Testis (tissue), 5 donors: ENCODE measurements at regions of chr4 and their contacts with region 1.

Region 1: DNA sequence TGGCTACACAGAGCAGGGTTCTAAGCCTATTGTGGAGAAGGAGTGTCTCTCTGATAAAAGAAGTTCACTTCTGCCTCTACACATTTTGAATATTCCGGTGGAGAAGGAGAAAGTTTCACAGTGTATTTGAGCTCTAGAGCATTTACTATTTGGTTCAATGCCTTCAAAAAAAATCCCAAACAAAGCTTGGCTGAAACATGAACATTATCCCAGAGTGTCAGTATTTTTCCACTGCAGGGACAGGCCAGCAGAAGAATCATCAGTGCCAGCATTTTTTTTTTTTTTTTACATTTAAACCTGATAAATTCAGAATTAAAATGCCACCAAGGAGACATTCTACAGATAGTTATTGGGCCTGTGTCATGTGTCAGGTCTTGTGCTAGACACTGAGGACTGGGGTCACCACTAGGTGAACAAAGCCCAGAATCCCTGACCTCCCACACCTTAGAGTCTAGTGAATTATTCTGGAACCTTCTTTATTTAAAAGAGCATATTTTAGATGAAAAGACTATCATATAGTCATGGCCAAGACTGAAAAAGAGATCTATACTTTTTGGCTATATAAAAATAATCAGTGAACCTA is 48.0 kb upstream of the NAP1L5 start:
- DNase-seq: no peak
- H3K4me3 ChIP-seq: no peak overlapping the region
- H3K27ac ChIP-seq: peak overlapping the region; percentile 57 to 66
- H3K4me1 ChIP-seq: peaks cover 18% of the 10 kb centered on the region
- H3K27me3 ChIP-seq: no peaks in the 10 kb centered on the region
- CTCF ChIP-seq: no peak
- POLR2A ChIP-seq: no peak

Region 2: GRCh38 chr4:88893961-88894360 is 148.3 kb after region 1 on chr4:
- intact Hi-C with region 1: loop called (anchors 5 kb)
- DNase-seq: no peak
- H3K4me3 ChIP-seq: no peak overlapping the region
- H3K27ac ChIP-seq: no peak overlapping the region
- H3K4me1 ChIP-seq: no peaks in the 10 kb centered on the region
- H3K27me3 ChIP-seq: no peaks in the 10 kb centered on the region
- CTCF ChIP-seq: no peak
- POLR2A ChIP-seq: no peak

Region 3: DNA sequence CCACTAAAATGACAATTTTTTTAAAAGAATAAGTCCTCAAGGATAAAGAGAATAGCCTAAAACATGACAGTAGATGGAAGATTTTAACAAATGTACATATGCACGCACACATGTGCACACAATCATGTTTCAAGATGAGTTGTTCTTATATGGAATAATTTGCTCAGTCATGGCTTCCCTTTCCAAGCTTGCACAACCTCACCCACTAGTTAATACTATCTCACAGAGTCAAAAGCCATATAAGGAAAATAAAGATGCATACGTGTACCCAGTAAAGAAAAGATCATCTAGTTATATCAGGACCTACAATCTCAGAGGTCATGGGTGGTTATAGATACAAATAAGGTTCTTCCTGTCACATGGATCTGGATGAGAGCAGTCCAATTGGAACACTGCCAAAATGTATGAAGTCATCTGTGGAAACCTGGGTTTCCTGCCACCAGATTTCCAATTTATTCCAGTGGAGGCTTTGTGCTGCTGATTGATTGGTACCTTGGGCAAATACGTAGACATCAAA is 255.2 kb after region 1 on chr4:
- intact Hi-C with region 1: no loop called
- DNase-seq: no peak
- H3K4me3 ChIP-seq: no peak overlapping the region
- H3K27ac ChIP-seq: no peak overlapping the region
- H3K4me1 ChIP-seq: no peaks in the 10 kb centered on the region
- H3K27me3 ChIP-seq: no peaks in the 10 kb centered on the region
- CTCF ChIP-seq: no peak
- POLR2A ChIP-seq: no peak